PC-9 (cell line): ENCODE measurements at regions of chr15 and their contacts with region 1.

Region 1: DNA sequence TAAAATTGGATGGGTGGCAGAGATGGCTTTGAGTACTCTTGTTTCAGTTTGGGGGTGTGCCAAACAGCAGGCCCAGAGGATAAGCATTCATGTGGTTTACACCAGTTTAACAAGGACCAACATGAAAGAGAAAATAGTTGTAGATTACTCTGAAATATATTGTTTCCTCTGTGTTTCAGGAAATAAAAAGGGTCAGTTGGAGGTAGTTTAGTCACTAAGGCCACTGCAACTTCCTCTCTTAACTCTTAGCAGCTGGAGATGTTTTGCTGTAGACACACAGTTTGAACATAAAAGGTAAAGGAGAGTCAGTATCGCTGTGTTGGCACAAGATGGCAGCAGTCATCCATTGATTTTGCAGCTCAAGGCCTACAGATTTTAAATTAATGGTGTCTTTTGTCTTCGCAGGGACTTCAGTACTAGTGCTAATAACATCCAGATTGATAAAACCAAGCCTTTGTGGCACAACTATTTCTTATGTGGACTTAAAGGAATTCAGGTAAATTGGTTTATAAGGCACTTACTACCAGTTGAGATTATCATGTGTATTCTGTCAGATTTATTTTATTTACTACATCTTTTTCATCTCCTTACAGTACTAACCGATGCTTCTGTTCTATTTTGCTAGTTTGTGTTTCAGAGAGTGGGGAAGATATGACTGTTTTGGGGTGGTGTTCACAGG is 65.5 kb downstream of the GALK2 start:
- DNase-seq: peak in 1 of 2 experiments; percentile 30
- H3K4me3 ChIP-seq: no peak overlapping the region
- H3K27ac ChIP-seq: no peak overlapping the region
- H3K4me1 ChIP-seq: no peaks in the 10 kb centered on the region
- H3K27me3 ChIP-seq: no peaks in the 10 kb centered on the region
- CTCF ChIP-seq: peak; percentile 71

Region 2: DNA sequence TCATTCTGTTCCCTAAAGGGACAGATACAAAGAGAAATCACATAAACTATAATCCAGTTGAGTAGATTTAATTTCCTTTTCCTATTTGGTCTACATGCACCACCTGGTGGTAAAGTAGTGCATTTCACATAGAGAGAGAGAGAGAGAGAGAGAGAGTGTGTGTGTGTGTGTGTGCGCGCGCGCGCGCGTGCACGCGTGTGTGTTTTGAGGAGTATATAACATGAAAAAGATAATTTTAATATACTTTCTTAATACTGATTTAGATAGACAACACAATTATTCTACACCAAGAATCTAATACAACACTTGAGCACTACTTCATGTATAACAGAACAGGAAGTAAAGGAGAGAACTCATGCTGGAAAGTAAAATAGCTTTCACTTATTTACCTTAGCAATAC is 186.4 kb after region 1 on chr15:
- CTCF ChIA-PET with region 1: interaction called, 3 read pairs
- POLR2A ChIA-PET with region 1: no interaction called
- intact Hi-C with region 1: loop called (anchors 1 kb)
- DNase-seq: peak in 1 of 2 experiments; percentile 22
- H3K4me3 ChIP-seq: no peak overlapping the region
- H3K27ac ChIP-seq: no peak overlapping the region
- H3K4me1 ChIP-seq: no peaks in the 10 kb centered on the region
- H3K27me3 ChIP-seq: no peaks in the 10 kb centered on the region
- CTCF ChIP-seq: peak; percentile 81

Region 3: GRCh38 chr15:49507261-49507660 is 271.7 kb after region 1 on chr15:
- CTCF ChIA-PET with region 1: no interaction called
- POLR2A ChIA-PET with region 1: no interaction called
- intact Hi-C with region 1: no loop called
- DNase-seq: no peak
- H3K4me3 ChIP-seq: no peak overlapping the region
- H3K27ac ChIP-seq: no peak overlapping the region
- H3K4me1 ChIP-seq: no peaks in the 10 kb centered on the region
- H3K27me3 ChIP-seq: no peaks in the 10 kb centered on the region
- CTCF ChIP-seq: no peak

Region 4: DNA sequence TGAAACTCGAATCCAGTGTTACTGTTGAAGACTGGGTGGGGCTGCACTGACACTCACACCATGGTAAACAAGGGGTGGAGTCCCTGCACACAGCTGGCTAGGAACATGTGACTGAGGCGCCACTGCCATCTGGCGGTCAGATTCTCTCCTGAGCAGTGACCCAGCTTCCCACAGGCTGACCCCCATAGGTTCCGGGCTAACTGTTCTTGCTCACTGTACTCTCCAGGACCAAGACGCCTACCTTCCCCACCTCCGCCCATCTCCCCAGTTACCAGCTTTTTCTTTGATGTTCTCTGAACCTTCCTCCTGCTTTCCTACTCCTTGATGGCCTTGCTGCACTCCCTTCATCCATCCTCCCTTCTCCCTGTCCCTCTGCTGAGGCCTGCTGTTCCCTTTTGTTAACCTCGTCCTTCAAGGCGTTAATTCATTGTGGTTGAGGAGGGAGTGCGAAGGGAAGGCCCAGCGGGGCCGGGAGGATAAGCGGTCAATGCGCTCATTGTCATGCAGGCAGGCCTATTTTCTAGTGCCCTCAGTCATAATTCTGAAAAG is 768.3 kb after region 1 on chr15:
- CTCF ChIA-PET with region 1: interaction called, 5 read pairs
- POLR2A ChIA-PET with region 1: no interaction called
- intact Hi-C with region 1: loop called (anchors 2 kb)
- DNase-seq: peak; percentile 63 to 71
- H3K4me3 ChIP-seq: no peak overlapping the region
- H3K27ac ChIP-seq: no peak overlapping the region
- H3K4me1 ChIP-seq: no peaks in the 10 kb centered on the region
- H3K27me3 ChIP-seq: no peaks in the 10 kb centered on the region
- CTCF ChIP-seq: peak; percentile 76

Region 5: GRCh38 chr15:50051803-50052419 is 816.3 kb after region 1 on chr15:
- CTCF ChIA-PET with region 1: no interaction called
- POLR2A ChIA-PET with region 1: no interaction called
- intact Hi-C with region 1: loop called (anchors 2 kb)
- DNase-seq: peak; percentile 32 to 75
- H3K4me3 ChIP-seq: no peak overlapping the region
- H3K27ac ChIP-seq: peak overlapping the region; percentile 14; the same call in 1 of the 2 replicates
- H3K4me1 ChIP-seq: 0 out of 2 replicates have a peak, but pooled peaks cover 5% of the 10 kb centered on the region
- H3K27me3 ChIP-seq: no peaks in the 10 kb centered on the region
- CTCF ChIP-seq: peak; percentile 78